ENCODE measurements at regions of chr2 and their contacts with region 1.

Region 1: GRCh38 chr2:230160112-230160660 is 59.6 kb downstream of the SP110 start:
- DNase-seq: peak; percentile 62
- H3K4me3 Mint-ChIP-seq: no peak overlapping the region
- H3K27ac Mint-ChIP-seq: no peak overlapping the region
- H3K4me1 Mint-ChIP-seq: peaks cover 2% of the 10 kb centered on the region
- H3K27me3 Mint-ChIP-seq: peaks cover 10% of the 10 kb centered on the region

Region 2: DNA sequence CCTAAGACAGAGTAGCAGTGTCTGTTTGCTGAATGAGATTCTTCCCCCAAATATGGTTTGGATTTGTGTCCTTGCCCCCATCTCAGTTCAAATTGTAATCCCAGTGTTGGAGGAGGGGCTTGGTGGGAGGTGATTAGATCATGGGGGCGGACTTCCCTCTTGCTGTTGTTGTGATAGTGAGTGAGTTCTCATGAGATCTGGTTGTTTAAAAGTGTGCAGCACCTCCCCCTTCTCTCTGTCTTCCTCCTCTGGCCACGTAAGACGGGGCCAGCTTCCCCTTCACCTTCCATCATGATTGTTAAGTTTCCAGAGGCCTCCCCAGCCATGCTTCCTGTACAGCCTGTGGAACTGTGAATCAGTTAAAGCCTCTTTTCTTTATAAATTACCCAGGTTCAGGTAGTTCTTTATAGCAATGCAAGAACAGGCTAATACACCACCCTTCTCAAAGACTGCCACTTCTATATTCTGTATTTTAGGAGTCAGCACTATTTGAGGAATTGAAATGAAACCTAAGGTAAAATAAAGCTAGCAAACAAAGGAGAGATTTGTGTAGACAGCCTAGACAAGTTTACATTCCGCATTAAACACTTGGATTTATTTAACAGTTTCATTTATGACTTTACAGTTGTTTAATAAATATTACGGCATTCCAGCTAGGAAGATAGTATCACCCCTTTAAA is 216.3 kb before region 1 on chr2:
- CTCF ChIA-PET with region 1: no interaction called
- DNase-seq: no peak
- H3K4me3 Mint-ChIP-seq: no peak overlapping the region
- H3K27ac Mint-ChIP-seq: no peak overlapping the region
- H3K4me1 Mint-ChIP-seq: peaks cover 7% of the 10 kb centered on the region
- H3K27me3 Mint-ChIP-seq: no peaks in the 10 kb centered on the region

Region 3: GRCh38 chr2:230007931-230008707 is 152.1 kb before region 1 on chr2:
- CTCF ChIA-PET with region 1: interaction called, 46 read pairs
- DNase-seq: peak; percentile 90
- H3K4me3 Mint-ChIP-seq: no peak overlapping the region
- H3K27ac Mint-ChIP-seq: no peak overlapping the region
- H3K4me1 Mint-ChIP-seq: peaks cover 4% of the 10 kb centered on the region
- H3K27me3 Mint-ChIP-seq: no peaks in the 10 kb centered on the region

Region 4: GRCh38 chr2:230068016-230068650 is 92.1 kb before region 1 on chr2:
- CTCF ChIA-PET with region 1: interaction called, 21 read pairs
- DNase-seq: peak; percentile 64
- H3K4me3 Mint-ChIP-seq: peak overlapping the region; percentile 87
- H3K27ac Mint-ChIP-seq: peak overlapping the region; percentile 19
- H3K4me1 Mint-ChIP-seq: peaks cover 18% of the 10 kb centered on the region
- H3K27me3 Mint-ChIP-seq: peaks cover 55% of the 10 kb centered on the region

Region 5: GRCh38 chr2:230170532-230170931 is 10.3 kb after region 1 on chr2:
- CTCF ChIA-PET with region 1: interaction called, 17 read pairs
- DNase-seq: peak; percentile 32
- H3K4me3 Mint-ChIP-seq: no peak overlapping the region
- H3K27ac Mint-ChIP-seq: peak overlapping the region; percentile 50
- H3K4me1 Mint-ChIP-seq: peaks cover 22% of the 10 kb centered on the region
- H3K27me3 Mint-ChIP-seq: no peaks in the 10 kb centered on the region